ENCODE measurements at regions of chr11 and their contacts with region 1.

Region 1: DNA sequence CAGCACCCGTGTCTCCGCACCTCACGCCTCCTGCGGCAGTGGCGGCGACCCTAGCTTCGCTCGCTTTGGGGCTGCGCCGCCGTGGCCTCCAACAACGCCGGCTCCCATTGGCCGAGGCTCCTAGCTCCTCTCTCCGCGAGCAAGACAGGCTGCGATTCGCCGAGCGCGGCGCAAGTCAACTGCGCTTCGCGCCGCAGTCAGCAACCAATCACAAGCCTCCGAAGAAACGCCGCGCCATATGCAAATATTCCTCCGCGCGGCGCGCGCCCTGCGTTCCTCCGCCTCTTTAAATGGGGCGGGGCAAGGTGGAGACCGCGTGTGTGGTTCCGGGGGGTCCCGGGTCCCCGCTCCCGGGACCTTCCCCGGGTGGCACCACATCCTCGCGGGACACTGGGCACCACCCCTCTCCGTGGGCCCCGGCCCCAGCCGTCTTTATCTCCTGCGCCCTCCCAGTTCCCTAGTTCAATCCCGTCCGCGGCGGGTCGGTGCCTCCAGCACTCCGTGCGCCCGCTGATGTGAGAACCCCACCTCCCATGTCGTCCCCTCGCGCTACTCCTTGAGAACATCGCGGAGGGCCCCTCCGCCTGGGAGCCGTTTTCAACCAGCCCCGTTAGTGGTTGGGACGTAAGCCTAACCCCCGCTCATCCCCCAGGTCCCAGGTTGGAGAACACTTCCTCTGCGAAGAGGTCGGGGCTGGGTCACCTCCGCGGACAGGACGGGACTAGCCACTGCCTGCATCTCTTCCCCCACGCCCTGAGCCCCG is at the start of gene NAP1L4:
- DNase-seq: peak; percentile 98 to 99
- ATAC-seq: peak; percentile 96
- H3K4me3 ChIP-seq: peak within 1 kb of the TSS; percentile 79 to 94
- H3K27ac ChIP-seq: peak within 1 kb of the TSS; percentile 76 to 93
- H3K4me1 ChIP-seq: no peaks in the 10 kb centered on the region
- H3K27me3 ChIP-seq: no peaks in the 10 kb centered on the region
- total RNA-seq, gene NAP1L4: 99.5 to 109 TPM

Region 2: GRCh38 chr11:2768471-2769408 is 223.7 kb before region 1 on chr11:
- intact Hi-C with region 1: no loop called
- DNase-seq: peak in 1 of 2 donors; percentile 70
- ATAC-seq: no peak
- H3K4me3 ChIP-seq: no peak overlapping the region
- H3K27ac ChIP-seq: no peak overlapping the region
- H3K4me1 ChIP-seq: no peaks in the 10 kb centered on the region
- H3K27me3 ChIP-seq: no peaks in the 10 kb centered on the region

Region 3: GRCh38 chr11:2945031-2945756 is 47.2 kb before region 1 on chr11:
- intact Hi-C with region 1: loop called in 1 of 2 experiments (anchors 5 kb)
- DNase-seq: peak; percentile 96
- ATAC-seq: peak; percentile 90
- H3K4me3 ChIP-seq: no peak overlapping the region
- H3K27ac ChIP-seq: no peak overlapping the region
- H3K4me1 ChIP-seq: no peaks in the 10 kb centered on the region
- H3K27me3 ChIP-seq: no peaks in the 10 kb centered on the region

Region 4: DNA sequence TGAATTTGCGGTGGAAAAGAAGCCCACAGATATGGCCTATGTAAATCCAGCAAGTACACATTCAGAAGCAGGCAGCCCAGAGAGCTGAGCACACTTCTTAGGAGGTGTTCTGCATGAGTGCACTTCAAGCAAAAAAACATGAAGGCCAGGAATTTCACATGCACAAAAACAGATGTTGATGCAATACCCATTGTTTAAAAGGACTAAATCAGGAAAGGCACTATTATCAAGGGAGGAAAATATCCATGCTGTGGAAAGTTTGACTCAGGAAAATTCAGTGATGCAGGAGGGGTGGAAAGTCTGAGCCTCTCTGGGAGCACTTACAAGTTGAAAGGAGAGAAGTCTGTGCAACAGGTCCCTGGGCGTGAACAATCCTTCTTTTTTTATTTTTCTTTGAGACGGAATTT is 80.6 kb after region 1 on chr11:
- intact Hi-C with region 1: no loop called
- DNase-seq: no peak
- ATAC-seq: peak; percentile 73
- H3K4me3 ChIP-seq: no peak overlapping the region
- H3K27ac ChIP-seq: no peak overlapping the region
- H3K4me1 ChIP-seq: no peaks in the 10 kb centered on the region
- H3K27me3 ChIP-seq: no peaks in the 10 kb centered on the region

Measured in aorta (tissue), 5 donors.